ENCODE measurements at regions of chr7 and their contacts with region 1.

Region 1: GRCh38 chr7:26667500-26668133 is 196.8 kb downstream of the SKAP2 start:
- DNase-seq: peak; percentile 85
- H3K4me3 ChIP-seq: no peak overlapping the region
- H3K27ac ChIP-seq: no peak overlapping the region
- H3K4me1 ChIP-seq: no peaks in the 10 kb centered on the region
- CTCF ChIP-seq: peak; percentile 96

Region 2: GRCh38 chr7:26278770-26279169 is 388.8 kb before region 1 on chr7:
- CTCF ChIA-PET with region 1: no interaction called
- POLR2A ChIA-PET with region 1: no interaction called
- intact Hi-C with region 1: loop called (anchors 5 kb)
- DNase-seq: peak; percentile 70
- H3K4me3 ChIP-seq: no peak overlapping the region
- H3K27ac ChIP-seq: no peak overlapping the region
- H3K4me1 ChIP-seq: no peaks in the 10 kb centered on the region
- CTCF ChIP-seq: peak; percentile 96

Region 3: DNA sequence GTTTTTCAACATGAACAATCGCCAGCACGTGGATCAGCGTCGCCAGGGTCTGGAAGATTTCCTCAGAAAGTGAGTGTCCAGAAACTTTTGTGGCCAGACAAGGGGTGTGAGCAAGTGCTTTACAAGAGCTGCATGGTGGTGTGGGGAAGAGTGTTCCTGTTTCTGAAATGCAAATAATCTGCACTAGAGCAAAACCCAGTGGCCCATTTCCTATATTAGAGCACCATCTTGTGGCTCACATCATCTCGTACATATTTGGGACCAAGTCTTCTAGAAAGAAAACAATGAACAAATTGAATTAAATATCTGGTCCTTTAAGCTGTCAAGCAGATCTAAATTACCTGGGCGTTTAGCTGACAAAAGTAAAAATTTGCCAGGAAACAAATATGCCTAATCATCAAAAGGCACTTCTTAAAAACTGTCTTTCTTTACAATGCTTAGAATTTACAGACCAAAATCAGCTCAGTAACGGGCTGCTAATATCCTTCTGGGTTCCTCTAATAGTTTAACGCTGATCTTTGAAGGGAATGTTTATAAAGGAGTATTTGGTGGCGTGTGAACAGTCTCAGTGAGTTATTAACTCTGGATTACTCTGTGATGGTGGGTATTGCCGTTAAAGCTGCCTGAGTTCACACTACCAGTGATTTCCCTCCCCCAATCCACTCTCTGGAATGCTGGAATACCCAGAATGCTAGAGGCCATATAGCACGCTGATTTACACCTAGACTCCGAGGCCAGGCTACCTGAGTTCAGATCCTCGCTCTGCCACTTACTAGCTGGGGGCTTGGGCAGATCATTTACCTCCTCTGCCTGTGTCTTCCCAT is 302.3 kb before region 1 on chr7:
- CTCF ChIA-PET with region 1: interaction called, 3 read pairs
- POLR2A ChIA-PET with region 1: no interaction called
- intact Hi-C with region 1: loop called (anchors 1 kb)
- DNase-seq: peak; percentile 89
- H3K4me3 ChIP-seq: no peak overlapping the region
- H3K27ac ChIP-seq: peak overlapping the region; percentile 29
- H3K4me1 ChIP-seq: peaks cover 21% of the 10 kb centered on the region
- CTCF ChIP-seq: peak; percentile 93

Region 4: DNA sequence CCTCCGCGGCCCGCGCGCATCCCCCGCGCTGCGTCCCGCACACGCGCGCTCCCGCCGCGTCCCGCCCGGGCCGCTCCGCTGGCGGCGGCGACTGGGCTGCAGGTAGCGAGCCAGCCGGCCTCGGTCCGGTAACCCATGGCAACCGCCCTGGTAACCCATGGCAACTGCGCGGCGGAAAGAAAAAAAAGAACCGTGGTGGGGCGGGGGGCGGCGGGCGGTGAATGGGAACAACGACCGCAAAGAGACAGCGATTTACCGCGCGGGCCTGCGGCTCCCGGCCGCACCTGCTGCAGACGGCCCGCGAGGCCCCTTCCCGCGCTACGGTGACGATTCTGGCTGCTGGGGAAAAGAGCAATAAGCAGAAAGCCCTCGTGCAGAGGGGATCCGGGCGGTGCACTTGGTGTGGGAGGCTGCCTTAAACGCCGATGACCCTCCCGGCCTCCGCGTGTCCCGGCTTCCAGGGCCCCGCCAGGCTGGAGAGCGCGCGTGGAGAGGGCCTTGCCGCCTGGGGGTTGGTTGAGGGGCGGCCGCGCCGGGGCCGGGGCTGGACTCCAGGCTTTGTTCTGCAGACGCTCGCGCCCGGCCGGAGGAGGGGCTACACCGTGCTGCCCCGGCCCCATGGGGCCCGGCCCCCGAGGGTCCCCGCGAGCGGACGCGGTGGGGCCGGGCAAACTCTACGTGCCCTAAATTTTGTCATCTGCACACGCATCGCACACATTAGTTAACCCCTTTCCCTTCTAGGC is 291.3 kb before region 1 on chr7:
- CTCF ChIA-PET with region 1: no interaction called
- POLR2A ChIA-PET with region 1: interaction called, 3 read pairs
- intact Hi-C with region 1: loop called (anchors 1 kb)
- DNase-seq: peak; percentile 37
- H3K4me3 ChIP-seq: peak overlapping the region; percentile 55
- H3K27ac ChIP-seq: no peak overlapping the region
- H3K4me1 ChIP-seq: peaks cover 16% of the 10 kb centered on the region
- CTCF ChIP-seq: no peak

Region 5: DNA sequence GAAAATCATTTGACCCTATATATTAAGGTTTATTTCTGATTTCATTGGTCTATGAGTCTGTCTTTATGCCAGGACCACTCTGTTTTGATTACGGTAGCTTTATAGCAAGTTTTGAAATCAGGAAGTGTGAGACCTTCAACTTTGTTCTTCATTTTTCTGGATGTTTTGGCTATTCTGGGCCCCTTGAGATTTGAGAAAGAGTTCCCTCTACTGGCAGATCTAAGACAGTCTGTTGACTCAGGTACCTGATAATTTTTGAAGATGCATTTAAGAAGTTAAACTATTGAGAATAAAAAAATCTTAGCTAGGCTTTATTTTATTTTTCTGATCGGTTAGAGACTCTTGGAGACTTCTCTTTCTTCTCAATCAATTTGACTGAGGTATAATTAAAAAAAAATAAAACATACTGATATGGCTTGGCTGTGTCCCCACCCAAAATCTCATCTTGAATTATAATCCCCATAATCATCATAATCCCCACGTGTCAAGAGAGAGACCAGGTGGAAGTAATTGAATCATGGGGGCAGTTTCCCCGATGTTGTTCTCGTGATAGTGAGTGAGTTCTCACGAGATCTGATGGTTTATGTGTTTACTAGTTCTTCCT is 166.8 kb before region 1 on chr7:
- CTCF ChIA-PET with region 1: no interaction called
- POLR2A ChIA-PET with region 1: interaction called, 3 read pairs
- intact Hi-C with region 1: loop called (anchors 2 kb)
- DNase-seq: peak; percentile 72
- H3K4me3 ChIP-seq: no peak overlapping the region
- H3K27ac ChIP-seq: no peak overlapping the region
- H3K4me1 ChIP-seq: no peaks in the 10 kb centered on the region
- CTCF ChIP-seq: peak; percentile 90

Measured in OCI-LY7 (cell line).